Breast epithelium (tissue), 4 donors: ENCODE measurements at regions of chr12 and their contacts with region 1.

Region 1: GRCh38 chr12:62576503-62576902 is 109.9 kb downstream of the MON2 start:
- DNase-seq: no peak
- H3K4me3 ChIP-seq: no peak overlapping the region
- H3K27ac ChIP-seq: no peak overlapping the region
- H3K4me1 ChIP-seq: no peaks in the 10 kb centered on the region
- H3K27me3 ChIP-seq: no peaks in the 10 kb centered on the region
- CTCF ChIP-seq: no peak
- POLR2A ChIP-seq: no peak

Region 2: GRCh38 chr12:62588916-62589315 is 12.4 kb after region 1 on chr12:
- intact Hi-C with region 1: loop called (anchors 2 kb)
- DNase-seq: no peak
- H3K4me3 ChIP-seq: no peak overlapping the region
- H3K27ac ChIP-seq: no peak overlapping the region
- H3K4me1 ChIP-seq: no peaks in the 10 kb centered on the region
- H3K27me3 ChIP-seq: no peaks in the 10 kb centered on the region
- CTCF ChIP-seq: no peak
- POLR2A ChIP-seq: no peak